ENCODE measurements at regions of chr10 and their contacts with region 1.

Region 1: DNA sequence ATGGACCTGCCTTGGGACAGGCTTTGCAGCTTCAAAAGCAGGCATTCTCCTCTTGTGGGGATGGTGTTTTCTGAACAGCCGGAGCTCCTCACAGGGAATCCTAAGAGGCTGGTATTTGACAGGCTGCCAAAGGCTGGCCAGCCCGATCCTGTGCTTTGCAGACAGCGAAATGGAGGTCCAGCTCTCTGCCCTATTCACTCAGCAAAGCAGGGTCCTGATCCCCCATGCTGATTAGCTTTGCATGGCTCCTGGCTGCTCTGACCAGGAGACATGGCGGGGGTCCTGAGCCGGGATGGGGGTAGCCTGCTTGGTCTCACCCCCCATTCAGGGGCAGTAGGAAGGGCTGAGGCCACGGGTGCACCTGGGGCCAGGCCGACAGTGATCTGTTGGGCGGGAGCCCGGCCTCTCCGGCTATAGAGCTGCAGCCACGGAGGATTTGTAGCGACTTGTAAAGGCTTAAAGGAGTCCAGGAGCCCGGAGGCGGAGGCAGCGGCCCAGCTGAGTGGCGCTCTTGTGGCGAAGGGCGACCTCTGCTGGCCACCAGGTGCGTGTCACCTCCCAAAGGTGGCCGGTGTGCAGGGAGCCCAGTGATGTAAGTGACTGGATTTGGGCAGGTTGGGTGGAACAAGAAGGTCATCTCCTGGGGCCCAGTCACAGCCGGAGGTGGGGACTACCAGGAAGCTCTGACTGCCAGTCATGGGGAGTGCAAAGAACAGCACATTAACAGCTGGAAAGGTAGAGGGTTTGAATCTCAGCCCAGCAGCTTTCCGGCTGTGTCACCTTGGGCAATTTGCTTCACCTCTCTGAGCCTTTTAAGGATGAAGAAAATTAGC is 126.5 kb downstream of the ZMIZ1 start:
- DNase-seq: peak; percentile 79
- H3K4me3 ChIP-seq: no peak overlapping the region
- H3K27ac ChIP-seq: no peak overlapping the region
- H3K4me1 ChIP-seq: peaks cover 37% of the 10 kb centered on the region
- H3K27me3 ChIP-seq: no peaks in the 10 kb centered on the region
- CTCF ChIP-seq: peak; percentile 85 to 96

Region 2: DNA sequence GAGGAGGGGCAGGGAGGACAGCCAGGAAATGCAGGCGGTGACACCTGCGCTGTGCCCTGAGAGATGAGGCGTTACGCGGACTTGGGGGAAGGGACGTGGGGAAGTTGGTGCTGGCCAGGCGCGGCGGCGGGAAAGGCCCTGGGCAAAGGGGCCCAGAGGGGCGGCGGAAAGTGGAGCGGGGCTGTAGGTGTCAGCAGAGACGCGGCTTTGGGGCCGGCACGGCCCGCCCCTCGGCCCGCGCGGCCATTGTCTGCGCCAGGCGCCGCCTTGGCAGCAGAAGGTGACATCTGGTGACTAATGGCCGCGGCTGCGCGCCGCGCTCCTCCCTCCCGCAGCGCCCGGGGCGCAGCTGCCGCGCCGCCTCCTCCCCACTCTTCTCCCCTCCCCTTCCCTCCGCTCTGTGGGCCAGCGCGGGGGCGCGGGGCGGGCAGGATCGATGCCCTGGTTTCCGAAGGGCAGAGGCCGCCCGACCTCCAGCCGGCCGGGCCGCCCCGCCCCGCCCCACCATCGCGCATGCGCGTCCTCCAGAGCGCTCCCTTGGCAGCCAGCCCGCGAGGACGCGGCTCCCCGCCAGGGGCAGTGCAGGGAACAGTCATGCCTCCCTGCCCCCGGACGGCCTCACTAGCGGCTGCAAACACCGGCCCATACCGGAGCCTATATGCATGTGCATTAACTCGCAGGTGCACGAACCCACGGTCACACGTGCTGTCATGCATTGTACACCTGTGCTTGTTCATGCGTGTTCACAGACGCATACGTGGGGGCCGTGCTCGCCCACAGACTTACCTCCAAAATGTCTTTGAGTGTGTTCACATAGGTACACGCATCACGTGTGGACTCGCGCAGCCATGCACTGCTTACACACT is 892.1 kb before region 1 on chr10:
- CTCF ChIA-PET with region 1: no interaction called
- dilution Hi-C with region 1: no loop called
- in situ Hi-C with region 1: no loop called
- intact Hi-C with region 1: loop called (anchors 2 kb)
- DNase-seq: peak; percentile 88
- H3K4me3 ChIP-seq: peak overlapping the region; percentile 53 to 65 (median 64)
- H3K27ac ChIP-seq: no peak overlapping the region
- H3K4me1 ChIP-seq: no peaks in the 10 kb centered on the region
- H3K27me3 ChIP-seq: no peaks in the 10 kb centered on the region
- CTCF ChIP-seq: peak; percentile 53 to 70

Region 3: GRCh38 chr10:78605800-78606350 is 589.4 kb before region 1 on chr10:
- CTCF ChIA-PET with region 1: no interaction called
- dilution Hi-C with region 1: no loop called
- in situ Hi-C with region 1: no loop called
- intact Hi-C with region 1: loop called (anchors 5 kb)
- DNase-seq: peak; percentile 61
- H3K4me3 ChIP-seq: no peak overlapping the region
- H3K27ac ChIP-seq: no peak overlapping the region
- H3K4me1 ChIP-seq: no peaks in the 10 kb centered on the region
- H3K27me3 ChIP-seq: peaks cover 3% of the 10 kb centered on the region
- CTCF ChIP-seq: peak; percentile 30 to 51

Region 4: DNA sequence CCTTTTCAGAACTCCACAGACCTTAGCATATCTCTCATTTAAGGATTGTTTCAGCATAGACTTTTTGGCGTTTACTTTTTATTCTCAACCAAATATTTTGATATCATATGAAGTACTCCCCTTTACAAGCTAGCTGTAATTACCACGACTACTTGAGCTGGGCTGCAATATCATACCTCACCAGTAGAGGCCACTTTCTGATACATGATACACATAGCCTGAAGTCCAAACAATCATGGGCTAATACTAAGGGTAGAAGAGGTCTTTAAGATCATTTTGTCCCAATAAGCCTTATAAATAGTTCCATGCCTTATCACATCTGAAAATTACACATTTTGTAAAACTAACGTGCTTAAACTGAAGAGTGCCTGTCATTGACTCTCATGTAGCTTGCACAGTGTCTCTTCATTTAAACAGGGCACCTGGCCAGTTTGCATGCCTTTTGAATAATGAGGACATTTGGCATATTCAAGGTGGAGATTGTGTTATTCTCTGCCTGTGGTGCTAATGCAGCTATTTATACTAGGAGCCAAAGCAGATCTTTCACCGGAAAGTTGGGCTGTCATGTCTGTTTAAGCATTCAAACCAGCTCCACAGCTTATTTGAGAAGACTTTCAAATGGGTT is 530.3 kb before region 1 on chr10:
- CTCF ChIA-PET with region 1: no interaction called
- dilution Hi-C with region 1: no loop called
- in situ Hi-C with region 1: loop called in 1 of 2 experiments (anchors 10 kb)
- intact Hi-C with region 1: loop called (anchors 1 kb)
- DNase-seq: peak; percentile 20
- H3K4me3 ChIP-seq: no peak overlapping the region
- H3K27ac ChIP-seq: no peak overlapping the region
- H3K4me1 ChIP-seq: no peaks in the 10 kb centered on the region
- H3K27me3 ChIP-seq: peaks cover 2% of the 10 kb centered on the region
- CTCF ChIP-seq: peak; percentile 75 to 91

Region 5: GRCh38 chr10:78925800-78926319 is 269.4 kb before region 1 on chr10:
- CTCF ChIA-PET with region 1: no interaction called
- dilution Hi-C with region 1: no loop called
- in situ Hi-C with region 1: no loop called
- intact Hi-C with region 1: loop called (anchors 5 kb)
- DNase-seq: peak; percentile 97
- H3K4me3 ChIP-seq: no peak overlapping the region
- H3K27ac ChIP-seq: no peak overlapping the region
- H3K4me1 ChIP-seq: peaks cover 23% of the 10 kb centered on the region
- H3K27me3 ChIP-seq: no peaks in the 10 kb centered on the region
- CTCF ChIP-seq: no peak

Region 6: GRCh38 chr10:79084012-79084971 is 111.0 kb before region 1 on chr10:
- CTCF ChIA-PET with region 1: no interaction called
- dilution Hi-C with region 1: loop called (anchors 5 kb)
- in situ Hi-C with region 1: no loop called
- intact Hi-C with region 1: no loop called
- DNase-seq: peak; percentile 88
- H3K4me3 ChIP-seq: no peak overlapping the region
- H3K27ac ChIP-seq: peak overlapping the region; percentile 85
- H3K4me1 ChIP-seq: peaks cover 78% of the 10 kb centered on the region
- H3K27me3 ChIP-seq: no peaks in the 10 kb centered on the region
- CTCF ChIP-seq: no peak

Region 7: GRCh38 chr10:79149662-79150443 is 45.5 kb before region 1 on chr10:
- CTCF ChIA-PET with region 1: interaction called, 22 read pairs
- dilution Hi-C with region 1: loop called (anchors 10 kb)
- in situ Hi-C with region 1: no loop called
- intact Hi-C with region 1: loop called (anchors 2 kb)
- DNase-seq: peak; percentile 81
- H3K4me3 ChIP-seq: peak overlapping the region in 1 of 3 experiments; percentile 26
- H3K27ac ChIP-seq: peak overlapping the region; percentile 80
- H3K4me1 ChIP-seq: peaks cover 60% of the 10 kb centered on the region
- H3K27me3 ChIP-seq: no peaks in the 10 kb centered on the region
- CTCF ChIP-seq: no peak

Region 8: DNA sequence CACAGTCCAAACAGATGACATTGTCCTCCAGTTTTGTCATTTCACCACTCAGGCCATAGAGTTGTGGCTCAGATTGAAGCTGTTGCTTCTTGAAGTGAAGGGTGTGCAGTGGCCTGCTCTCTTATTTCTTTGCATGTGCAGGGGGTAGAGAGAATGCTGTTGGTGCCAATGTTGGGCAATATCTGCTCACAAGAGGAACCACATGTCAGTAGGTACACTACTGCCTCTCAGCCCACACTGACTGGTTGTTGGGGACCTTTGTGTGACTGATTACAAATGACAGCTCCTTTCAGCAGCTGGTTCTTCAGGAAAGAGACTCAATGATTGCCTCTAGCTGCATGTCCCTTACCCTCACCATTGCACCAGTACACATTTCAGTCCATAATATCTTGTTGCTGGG is 393.5 kb after region 1 on chr10:
- CTCF ChIA-PET with region 1: no interaction called
- dilution Hi-C with region 1: no loop called
- in situ Hi-C with region 1: no loop called
- intact Hi-C with region 1: no loop called
- DNase-seq: no peak
- H3K4me3 ChIP-seq: no peak overlapping the region
- H3K27ac ChIP-seq: no peak overlapping the region
- H3K4me1 ChIP-seq: no peaks in the 10 kb centered on the region
- H3K27me3 ChIP-seq: no peaks in the 10 kb centered on the region
- CTCF ChIP-seq: no peak

Measured in mammary epithelial cell (primary cell).